Activated T-helper 2 cell treated with anti-CD3 and anti-CD28 coated beads, Interferon-gamma antibody, Interleukin-2, Interleukin-4, amounts not matched to agents 10 μg/mL and 5 μg/mL and 100 μg/mL, durations not matched to agents 14 hours and 24 hours and 36 hours (primary cell): ENCODE measurements at regions of chr1 and their contacts with region 1.

Region 1: GRCh38 chr1:27671964-27672749 is at the start of gene IFI6:
- DNase-seq: peak; percentile 83
- H3K4me3 Mint-ChIP-seq: peak within 1 kb of the TSS; percentile 88
- H3K27ac Mint-ChIP-seq: peak within 1 kb of the TSS; percentile 92
- H3K4me1 Mint-ChIP-seq: peaks cover 33% of the 10 kb centered on the region
- H3K27me3 Mint-ChIP-seq: no peaks in the 10 kb centered on the region
- total RNA-seq, gene IFI6: 35.0 and 35.2 TPM in 2 replicates

Region 2: DNA sequence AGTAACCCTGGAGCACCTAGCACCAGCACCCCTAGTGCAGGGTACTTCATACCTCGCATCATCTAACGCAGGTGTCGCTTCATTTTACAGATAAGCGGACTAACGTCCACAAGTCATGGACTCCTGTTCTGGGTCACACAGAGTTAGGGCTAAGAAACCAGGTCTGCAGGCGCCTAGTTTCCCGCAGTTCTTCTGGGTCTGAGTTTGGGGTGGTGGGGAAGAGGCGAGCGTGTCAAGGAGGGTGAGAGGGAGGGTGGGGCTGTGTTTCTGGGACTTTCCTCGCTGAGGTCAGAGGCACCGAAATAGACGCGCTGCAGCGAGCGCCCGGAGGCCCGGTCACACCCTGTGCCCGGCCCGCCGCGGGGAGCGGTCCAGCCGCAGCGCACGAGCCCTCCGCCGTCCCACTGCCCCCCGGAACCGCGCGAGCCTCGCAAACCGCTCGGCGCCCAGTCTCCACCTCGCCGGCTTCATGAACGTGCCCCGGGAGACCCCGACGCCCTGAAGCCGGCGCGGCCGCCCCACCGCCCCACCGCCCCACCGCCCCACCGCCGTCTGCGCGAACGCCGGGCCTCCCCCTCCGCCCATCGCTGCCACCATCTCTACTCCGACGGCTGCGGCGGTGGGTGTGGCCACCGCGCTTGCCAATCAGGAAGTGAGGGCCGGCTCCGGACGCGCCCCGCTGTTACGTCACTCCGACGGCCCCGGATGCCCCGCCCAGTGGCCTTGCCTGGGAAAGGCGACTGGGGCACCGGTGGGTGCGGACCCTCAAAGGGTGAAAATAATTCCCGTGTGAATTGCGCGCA is 12.5 kb before region 1 on chr1:
- intact Hi-C with region 1: no loop called
- DNase-seq: peak; percentile 87
- H3K4me3 Mint-ChIP-seq: peak overlapping the region; percentile 87
- H3K27ac Mint-ChIP-seq: peak overlapping the region; percentile 98
- H3K4me1 Mint-ChIP-seq: peaks cover 57% of the 10 kb centered on the region
- H3K27me3 Mint-ChIP-seq: no peaks in the 10 kb centered on the region

Region 3: DNA sequence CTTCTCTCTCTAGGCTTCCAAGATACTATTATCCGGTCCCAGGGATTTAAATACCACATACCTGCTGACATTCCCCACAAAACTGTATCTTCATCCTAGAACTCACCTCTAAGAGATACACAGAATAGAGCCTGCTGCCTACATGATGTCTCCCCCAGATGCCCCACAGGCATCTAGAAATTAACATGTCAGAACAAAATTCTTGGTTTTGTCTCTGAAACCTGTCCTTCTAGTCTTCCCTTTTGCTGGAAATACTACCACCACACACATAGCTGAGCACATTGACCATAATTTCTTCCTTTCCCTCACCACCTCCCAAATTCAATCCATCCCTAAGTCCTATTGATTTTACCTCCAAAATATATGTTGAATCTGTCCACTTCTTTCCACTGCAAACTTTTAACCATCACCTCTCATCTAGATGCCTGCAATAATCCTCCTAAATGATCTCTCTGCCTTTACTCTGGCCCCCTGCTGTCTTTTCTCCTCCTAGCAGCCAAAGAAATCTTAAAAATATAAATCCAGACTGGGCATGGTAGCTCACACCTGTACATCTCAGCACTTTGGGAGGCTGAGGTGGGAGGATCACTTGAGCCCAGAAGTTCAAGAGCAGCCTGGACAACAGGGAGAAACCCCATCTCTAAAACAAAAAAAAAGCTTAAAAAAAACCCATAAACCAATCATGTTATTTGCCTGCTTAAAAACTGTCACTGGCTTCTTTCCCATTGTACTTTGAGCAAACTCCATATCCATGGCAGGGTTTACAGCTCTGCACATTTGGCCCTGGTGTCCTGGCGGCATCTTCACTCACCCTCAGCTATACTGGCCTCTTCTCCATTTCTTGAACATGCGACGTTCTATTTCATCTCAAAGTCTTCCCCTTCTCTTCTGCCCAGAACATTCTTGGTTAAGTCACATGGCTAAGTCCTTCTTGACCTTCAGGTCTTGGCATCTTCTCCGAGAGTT is 47.4 kb after region 1 on chr1:
- intact Hi-C with region 1: loop called (anchors 2 kb)
- DNase-seq: no peak
- H3K4me3 Mint-ChIP-seq: no peak overlapping the region
- H3K27ac Mint-ChIP-seq: no peak overlapping the region
- H3K4me1 Mint-ChIP-seq: peaks cover 3% of the 10 kb centered on the region
- H3K27me3 Mint-ChIP-seq: peaks cover 21% of the 10 kb centered on the region

Region 4: DNA sequence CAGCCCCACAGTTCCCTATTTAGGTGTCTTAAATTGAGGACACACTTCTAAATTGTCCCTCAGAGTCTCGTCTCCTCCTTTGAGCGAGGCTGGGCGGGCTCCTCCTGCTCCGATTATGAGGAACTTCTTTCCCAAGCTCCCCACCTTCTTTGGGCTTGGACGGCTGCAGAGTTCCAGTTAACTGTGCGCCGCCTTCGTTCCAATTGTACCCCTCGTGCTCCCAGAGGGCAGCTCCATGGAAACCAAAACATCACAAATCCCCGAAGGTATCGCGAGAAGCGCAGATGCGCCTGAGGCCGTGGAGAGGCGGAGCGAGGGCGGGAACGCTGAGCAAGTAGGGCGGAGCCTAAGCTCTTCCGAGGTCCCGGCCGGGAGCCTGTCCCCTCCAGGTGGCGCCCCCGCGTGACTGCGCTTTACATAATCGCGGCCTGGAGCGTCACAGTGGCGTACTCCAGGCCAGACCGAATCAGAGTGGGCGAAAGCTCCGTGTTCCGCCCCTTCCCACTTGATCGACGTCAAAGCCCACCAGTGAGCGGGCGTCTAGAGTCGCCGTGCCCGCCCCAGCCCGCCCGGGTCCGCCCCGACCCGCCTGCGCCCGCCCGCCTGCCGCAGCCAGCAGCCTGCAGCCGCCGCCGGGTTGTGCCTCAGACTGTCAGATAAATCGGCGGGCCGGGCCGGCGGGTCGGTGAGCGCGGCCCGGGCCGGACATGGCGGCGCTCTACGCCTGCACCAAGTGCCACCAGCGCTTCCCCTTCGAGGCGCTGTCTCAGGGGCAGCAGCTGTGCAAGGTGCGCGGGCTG is 53.4 kb after region 1 on chr1 and contains the start of gene FAM76A:
- intact Hi-C with region 1: loop called (anchors 2 kb)
- DNase-seq: peak; percentile 99
- H3K4me3 Mint-ChIP-seq: peak within 1 kb of the TSS; percentile 85
- H3K27ac Mint-ChIP-seq: peak within 1 kb of the TSS; percentile 99
- H3K4me1 Mint-ChIP-seq: peaks cover 14% of the 10 kb centered on the region
- H3K27me3 Mint-ChIP-seq: no peaks in the 10 kb centered on the region
- total RNA-seq, gene FAM76A: 13.6 and 14.0 TPM in 2 replicates

Region 5: GRCh38 chr1:27830621-27831424 is 158.7 kb after region 1 on chr1 and contains the start of gene PPP1R8:
- intact Hi-C with region 1: loop called (anchors 2 kb)
- DNase-seq: peak; percentile 83
- H3K4me3 Mint-ChIP-seq: peak within 1 kb of the TSS; percentile 96
- H3K27ac Mint-ChIP-seq: peak within 1 kb of the TSS; percentile 93
- H3K4me1 Mint-ChIP-seq: peaks cover 26% of the 10 kb centered on the region
- H3K27me3 Mint-ChIP-seq: no peaks in the 10 kb centered on the region
- total RNA-seq, gene PPP1R8: 67.3 and 71.8 TPM in 2 replicates